ENCODE measurements at regions of chr2 and their contacts with region 1.

Region 1: DNA sequence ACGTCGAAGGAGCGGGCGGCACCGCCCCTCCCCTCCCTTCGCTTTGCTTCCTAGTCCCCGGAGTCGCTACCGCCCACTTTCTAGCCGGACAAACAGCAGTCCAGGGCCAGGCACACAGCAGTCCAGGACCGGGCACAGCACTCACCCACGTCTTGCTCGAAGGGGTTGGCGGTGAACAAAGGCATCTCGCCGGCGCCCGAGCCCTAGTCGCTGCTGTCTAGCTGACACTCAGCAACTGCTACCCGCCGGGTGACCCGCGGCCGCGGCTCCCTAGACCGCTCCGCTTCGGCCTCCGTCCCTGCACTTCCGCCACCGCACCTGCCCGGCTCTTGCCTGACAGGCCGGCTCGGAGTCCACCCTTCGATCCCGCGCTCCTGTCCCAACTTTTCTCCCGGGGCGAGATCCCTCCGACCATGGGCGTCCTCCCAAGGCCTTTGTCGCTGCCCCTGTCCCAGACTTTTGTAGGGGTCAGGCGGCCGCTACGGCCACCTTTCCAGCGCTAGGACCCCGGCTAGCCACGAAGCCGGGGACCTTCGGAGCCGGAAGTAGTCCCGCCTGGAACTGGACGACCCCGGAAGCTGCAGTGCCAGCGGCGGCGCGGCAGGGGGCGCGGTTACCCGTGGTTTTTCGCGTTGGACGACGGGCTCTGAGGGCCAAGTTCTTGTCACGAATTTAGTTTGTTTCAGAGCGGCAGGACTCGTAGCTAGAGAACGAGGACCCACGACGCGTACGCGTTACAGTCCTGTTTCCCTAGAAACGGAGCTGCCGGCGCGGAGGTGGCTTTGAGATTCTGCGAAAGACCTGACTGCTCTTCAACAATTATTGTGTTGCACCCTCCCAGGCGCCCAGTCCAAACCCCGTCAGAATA is at the start of gene STAM2:
- DNase-seq: peak; percentile 77
- H3K4me3 ChIP-seq: peak within 1 kb of the TSS; percentile 95
- CTCF ChIP-seq: peak; percentile 89

Region 2: GRCh38 chr2:152134488-152135280 is 41.0 kb before region 1 on chr2:
- in situ Hi-C with region 1: no loop called
- DNase-seq: peak; percentile 1
- H3K4me3 ChIP-seq: no peak overlapping the region
- CTCF ChIP-seq: no peak

Region 3: GRCh38 chr2:152611458-152612231 is 436.0 kb after region 1 on chr2:
- in situ Hi-C with region 1: loop called (anchors 25 kb)
- DNase-seq: peak; percentile 77
- H3K4me3 ChIP-seq: no peak overlapping the region
- CTCF ChIP-seq: no peak

Measured in astrocyte of the cerebellum (primary cell).